Prostate gland (tissue), 2 donors: ENCODE measurements at regions of chr6 and their contacts with region 1.

Region 1: GRCh38 chr6:36027501-36028087 is at the start of gene MAPK14:
- DNase-seq: peak; percentile 100
- H3K4me3 ChIP-seq: peak within 1 kb of the TSS; percentile 99
- H3K27ac ChIP-seq: peak within 1 kb of the TSS; percentile 87 to 93
- H3K4me1 ChIP-seq: no peaks in the 10 kb centered on the region
- H3K27me3 ChIP-seq: no peaks in the 10 kb centered on the region
- CTCF ChIP-seq: peak; percentile 79 to 99 (median 96)
- POLR2A ChIP-seq: peak; percentile 95
- total RNA-seq, gene MAPK14: 36.7 to 43.2 TPM

Region 2: DNA sequence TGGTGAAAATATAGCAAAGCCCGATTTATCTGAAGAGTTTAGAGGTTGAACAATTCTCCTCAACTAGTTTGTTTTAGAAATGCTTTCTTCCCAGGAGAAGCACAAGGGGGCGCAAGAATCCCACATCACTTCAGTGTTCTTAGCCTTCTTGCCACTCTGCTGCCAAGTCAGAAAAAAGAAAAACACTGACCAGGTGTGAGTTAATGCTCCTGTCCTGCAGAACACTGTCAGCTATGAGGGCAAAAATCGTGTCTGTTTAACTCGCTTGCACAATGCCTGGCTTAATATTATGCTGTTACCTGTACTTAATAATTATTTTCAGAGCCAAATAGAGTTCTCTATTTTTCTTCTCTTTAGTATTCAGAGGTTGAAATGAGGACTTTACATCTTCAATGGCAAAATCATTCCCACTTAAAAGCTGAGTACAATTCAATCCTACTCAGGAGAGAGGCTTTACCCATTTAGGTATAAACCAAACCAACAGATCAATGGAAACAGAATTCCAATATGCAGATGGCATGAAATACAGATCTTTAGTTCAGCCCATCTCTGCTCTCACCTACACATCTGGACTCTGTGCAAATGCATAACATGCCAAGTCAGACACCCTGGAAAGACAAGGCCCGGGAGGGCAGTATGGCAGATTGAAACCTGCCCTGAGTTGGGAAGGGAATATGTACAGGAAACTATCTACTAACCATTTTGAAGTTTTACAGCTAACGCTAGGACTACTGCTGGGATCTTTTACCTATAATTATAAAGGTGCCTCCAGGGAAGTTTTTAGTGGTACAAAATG is 443.5 kb before region 1 on chr6:
- intact Hi-C with region 1: loop called (anchors 5 kb)
- DNase-seq: peak; percentile 81
- H3K4me3 ChIP-seq: no peak overlapping the region
- H3K27ac ChIP-seq: peak overlapping the region; percentile 70 to 84
- H3K4me1 ChIP-seq: peaks cover 12% of the 10 kb centered on the region
- H3K27me3 ChIP-seq: no peaks in the 10 kb centered on the region
- CTCF ChIP-seq: peak; percentile 59 to 97 (median 87)
- POLR2A ChIP-seq: no peak

Region 3: DNA sequence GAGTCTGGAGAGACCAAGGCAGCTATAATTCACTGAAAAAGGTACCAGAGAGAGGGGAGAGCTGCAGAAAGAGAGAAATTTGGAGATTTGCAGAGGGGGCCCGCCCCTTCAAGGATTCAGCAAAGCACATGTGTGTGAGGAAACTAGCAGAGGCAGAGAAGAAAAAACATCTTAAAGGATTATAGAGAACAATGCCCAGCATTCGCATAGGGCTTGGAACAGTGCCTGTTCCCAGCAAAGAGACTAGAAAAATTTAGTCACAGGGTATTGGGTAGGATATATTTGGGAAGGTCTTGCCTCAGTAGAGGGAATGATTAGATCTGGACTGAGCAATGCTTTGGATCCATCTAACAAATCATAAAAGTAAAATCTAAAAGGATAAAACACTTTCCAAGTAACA is 150.7 kb before region 1 on chr6:
- intact Hi-C with region 1: no loop called
- DNase-seq: no peak
- H3K4me3 ChIP-seq: no peak overlapping the region
- H3K27ac ChIP-seq: no peak overlapping the region
- H3K4me1 ChIP-seq: no peaks in the 10 kb centered on the region
- H3K27me3 ChIP-seq: no peaks in the 10 kb centered on the region
- CTCF ChIP-seq: no peak
- POLR2A ChIP-seq: no peak

Region 4: DNA sequence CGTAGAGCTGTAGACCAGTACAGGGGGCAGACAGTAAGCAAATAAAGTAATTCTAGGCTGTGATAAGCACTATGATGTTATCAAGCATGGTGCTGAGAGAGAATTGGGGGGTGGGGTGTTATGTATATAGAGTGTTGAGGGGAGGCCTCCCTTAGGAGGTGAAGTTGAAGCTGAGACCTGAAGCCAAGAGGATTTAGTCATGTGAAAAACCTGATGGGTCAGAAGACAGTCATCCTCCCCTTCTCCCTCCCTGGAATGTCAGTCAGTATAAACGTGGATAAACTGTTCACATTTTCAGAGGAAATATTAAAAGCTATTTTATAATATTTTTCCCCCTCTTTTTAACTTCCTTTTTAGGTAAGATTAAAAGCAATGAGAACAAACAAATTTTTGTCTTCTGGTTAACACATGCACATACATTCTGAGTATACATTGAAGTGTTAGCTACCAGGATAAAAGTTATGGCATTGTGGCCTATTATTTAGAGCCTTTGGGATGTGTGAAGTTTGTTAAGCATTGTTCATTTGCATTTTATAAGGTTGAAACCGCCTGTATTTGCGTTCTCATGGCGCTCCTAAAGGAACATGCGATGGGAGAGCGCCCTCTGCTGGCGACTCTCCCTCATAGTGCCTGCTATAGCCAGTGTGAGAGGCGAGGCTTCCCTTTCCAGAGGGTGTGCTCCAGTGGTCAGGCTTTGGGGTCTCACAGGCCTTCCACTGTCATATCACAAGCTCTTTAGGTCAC is 67.3 kb after region 1 on chr6:
- intact Hi-C with region 1: loop called (anchors 1 kb)
- DNase-seq: peak; percentile 79
- H3K4me3 ChIP-seq: no peak overlapping the region
- H3K27ac ChIP-seq: peak overlapping the region in 1 of 2 donors; percentile 40
- H3K4me1 ChIP-seq: peaks cover 3% of the 10 kb centered on the region
- H3K27me3 ChIP-seq: no peaks in the 10 kb centered on the region
- CTCF ChIP-seq: peak; percentile 95 to 99 (median 96)
- POLR2A ChIP-seq: no peak

Region 5: DNA sequence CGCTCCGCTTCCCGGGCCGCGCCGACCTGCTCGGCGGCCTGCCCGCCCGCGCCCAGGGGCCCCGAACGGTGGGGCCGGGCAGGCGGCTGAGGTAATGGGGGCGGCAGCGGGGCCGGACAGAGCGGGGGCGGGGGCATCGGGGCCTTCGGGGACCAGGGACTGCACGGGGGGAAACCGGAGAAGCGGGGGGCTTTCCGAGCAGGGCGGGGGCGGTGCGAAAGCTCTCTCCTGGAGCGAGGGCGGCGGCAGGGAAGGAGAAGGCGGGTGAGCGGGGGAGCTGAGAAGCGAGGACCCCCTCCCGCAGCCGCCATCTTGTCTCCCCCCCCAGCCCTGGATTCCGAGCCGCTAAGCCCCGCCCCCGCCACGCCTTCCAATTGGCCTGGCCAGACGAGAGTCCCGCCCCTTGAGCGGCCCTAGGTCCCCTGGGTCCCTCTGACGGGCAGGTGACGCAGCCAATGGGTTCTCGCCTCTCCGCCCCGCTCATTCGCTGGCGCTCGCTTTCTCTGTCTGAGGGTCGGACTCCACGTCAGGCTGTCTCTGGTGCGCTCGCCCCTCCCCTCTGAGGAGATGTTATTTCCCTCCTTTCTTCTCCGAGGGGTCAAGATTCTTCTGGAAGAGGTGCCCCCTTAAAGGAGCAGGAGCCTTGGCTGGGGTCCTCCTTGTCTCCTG is 169.4 kb after region 1 on chr6:
- intact Hi-C with region 1: loop called (anchors 2 kb)
- DNase-seq: peak; percentile 98
- H3K4me3 ChIP-seq: peak overlapping the region; percentile 81 to 89
- H3K27ac ChIP-seq: peak overlapping the region; percentile 96 to 99
- H3K4me1 ChIP-seq: peaks cover 6% of the 10 kb centered on the region
- H3K27me3 ChIP-seq: no peaks in the 10 kb centered on the region
- CTCF ChIP-seq: no peak
- POLR2A ChIP-seq: peak; percentile 61

Region 6: GRCh38 chr6:36360241-36361054 is 332.9 kb after region 1 on chr6:
- intact Hi-C with region 1: loop called (anchors 10 kb)
- DNase-seq: peak; percentile 75
- H3K4me3 ChIP-seq: no peak overlapping the region
- H3K27ac ChIP-seq: no peak overlapping the region
- H3K4me1 ChIP-seq: no peaks in the 10 kb centered on the region
- H3K27me3 ChIP-seq: no peaks in the 10 kb centered on the region
- CTCF ChIP-seq: peak; percentile 48 to 87 (median 83)
- POLR2A ChIP-seq: no peak